Aorta (tissue), 5 donors: ENCODE measurements at regions of chr19 and their contacts with region 1.

Region 1: GRCh38 chr19:11380653-11381534 is 3.2 kb downstream of the EPOR start:
- DNase-seq: peak; percentile 95 to 96
- ATAC-seq: peak; percentile 91
- H3K4me3 ChIP-seq: peak overlapping the region; percentile 24 to 28
- H3K27ac ChIP-seq: peak overlapping the region in 1 of 2 donors; percentile 65
- H3K4me1 ChIP-seq: peaks cover 2 to 4% of the 10 kb centered on the region in 2 donors
- H3K27me3 ChIP-seq: no peaks in the 10 kb centered on the region

Region 2: DNA sequence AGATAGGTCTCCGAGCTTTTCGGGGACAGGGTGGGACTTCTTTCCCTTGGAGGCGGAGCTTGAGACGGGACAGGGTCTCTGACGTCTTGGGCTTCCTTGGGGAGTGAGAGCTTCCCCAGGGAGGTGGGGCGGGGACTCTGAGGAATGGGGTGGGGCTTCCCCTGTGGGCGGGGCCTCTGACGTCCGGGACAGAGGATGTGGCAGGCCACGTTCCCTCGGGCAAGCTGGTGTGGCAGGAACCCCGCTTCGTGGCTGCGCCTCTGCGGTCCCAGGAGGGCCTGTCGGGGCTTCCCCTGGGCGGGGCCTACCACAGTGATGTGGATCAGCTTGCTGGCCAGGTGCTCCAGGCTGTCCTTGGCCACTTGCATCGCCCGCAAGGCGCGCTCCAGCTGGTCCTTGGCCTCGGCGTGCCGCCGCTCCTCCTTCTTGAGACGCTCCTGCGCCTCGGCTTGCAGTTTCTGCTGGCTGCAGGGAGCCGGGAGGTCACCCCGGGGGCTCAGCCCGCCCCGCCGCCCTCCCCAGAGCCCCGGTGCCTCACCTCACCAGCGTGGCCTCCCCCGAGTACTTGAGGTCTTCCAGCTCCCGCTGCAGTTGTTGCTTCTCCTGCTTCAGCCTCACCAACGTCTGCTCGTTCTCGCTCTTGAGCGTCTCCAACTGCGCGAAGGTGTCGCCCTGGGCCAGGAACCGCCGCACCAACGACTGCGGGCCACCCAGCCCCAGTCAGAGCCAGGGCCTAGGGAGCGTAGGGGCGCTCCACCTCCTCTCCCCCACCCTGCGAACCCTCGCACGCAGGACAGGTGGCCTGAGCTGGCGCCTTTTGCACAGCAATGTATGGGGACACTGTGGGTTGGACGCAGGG is 41.5 kb after region 1 on chr19:
- intact Hi-C with region 1: loop called (anchors 5 kb)
- DNase-seq: peak; percentile 93 to 94
- ATAC-seq: peak; percentile 72
- H3K4me3 ChIP-seq: no peak overlapping the region
- H3K27ac ChIP-seq: peak overlapping the region in 1 of 2 donors; percentile 1
- H3K4me1 ChIP-seq: no peaks in the 10 kb centered on the region
- H3K27me3 ChIP-seq: no peaks in the 10 kb centered on the region

Region 3: GRCh38 chr19:11435058-11435832 is 54.4 kb after region 1 on chr19 and contains the starts of genes ODAD3 and PRKCSH:
- intact Hi-C with region 1: loop called (anchors 5 kb)
- DNase-seq: peak; percentile 99 to 100
- ATAC-seq: peak; percentile 99
- H3K4me3 ChIP-seq: peak within 1 kb of the TSS; percentile 49 to 67
- H3K27ac ChIP-seq: peak within 1 kb of the TSS in 1 of 2 donors; percentile 66
- H3K4me1 ChIP-seq: no peaks in the 10 kb centered on the region
- H3K27me3 ChIP-seq: no peaks in the 10 kb centered on the region
- total RNA-seq, gene ODAD3: 0.49 to 1.8 TPM
- total RNA-seq, gene PRKCSH: 168 to 207 TPM